ENCODE measurements at regions of chr4 and their contacts with region 1.

Region 1: DNA sequence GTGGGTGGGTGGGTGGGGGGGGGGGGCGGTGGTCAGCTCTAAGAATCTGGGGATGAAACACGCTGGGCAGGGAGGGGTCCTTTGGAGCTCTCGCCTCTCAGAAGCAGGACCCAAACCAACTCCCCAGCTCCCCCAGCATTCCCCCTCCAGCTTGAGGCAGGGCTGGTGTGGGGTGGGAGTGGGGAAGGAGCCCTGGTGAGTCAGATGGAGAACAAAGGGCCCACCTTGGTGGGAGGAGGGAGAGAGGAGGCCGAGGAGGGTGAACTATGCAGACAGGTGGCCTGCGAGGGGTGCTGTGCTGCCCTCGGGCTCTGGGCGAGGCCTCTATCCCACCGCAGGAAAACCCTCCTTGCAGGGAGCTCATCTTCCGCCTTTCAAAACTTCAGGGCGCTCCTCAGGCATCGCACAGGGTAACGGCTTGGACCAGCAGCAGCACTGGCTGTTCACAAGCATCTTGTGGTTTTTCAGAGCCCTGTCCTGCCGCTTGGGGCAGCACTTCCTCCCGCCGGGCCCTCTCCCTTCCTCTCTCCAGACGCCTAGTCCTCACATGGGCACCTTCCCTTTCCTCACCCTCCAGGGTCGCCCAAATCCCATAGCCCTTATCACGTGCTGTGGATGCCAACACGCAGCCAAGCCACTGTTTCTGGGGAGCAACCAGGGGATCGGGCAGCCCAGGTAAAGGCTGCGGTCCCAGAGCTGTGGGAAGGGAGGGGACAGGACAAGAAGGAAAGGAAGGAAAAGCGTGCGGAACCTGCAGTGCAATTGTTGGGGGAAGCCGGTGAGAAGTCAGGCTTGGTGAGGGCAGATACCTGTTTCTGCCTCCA is 34.0 kb upstream of the GRPEL1 start:
- DNase-seq: peak; percentile 68
- ATAC-seq: peak; percentile 61
- H3K4me3 Mint-ChIP-seq: peak overlapping the region; percentile 79
- H3K27ac Mint-ChIP-seq: no peak overlapping the region
- H3K4me1 Mint-ChIP-seq: peaks cover 18% of the 10 kb centered on the region
- H3K27me3 Mint-ChIP-seq: peaks cover 12% of the 10 kb centered on the region

Region 2: DNA sequence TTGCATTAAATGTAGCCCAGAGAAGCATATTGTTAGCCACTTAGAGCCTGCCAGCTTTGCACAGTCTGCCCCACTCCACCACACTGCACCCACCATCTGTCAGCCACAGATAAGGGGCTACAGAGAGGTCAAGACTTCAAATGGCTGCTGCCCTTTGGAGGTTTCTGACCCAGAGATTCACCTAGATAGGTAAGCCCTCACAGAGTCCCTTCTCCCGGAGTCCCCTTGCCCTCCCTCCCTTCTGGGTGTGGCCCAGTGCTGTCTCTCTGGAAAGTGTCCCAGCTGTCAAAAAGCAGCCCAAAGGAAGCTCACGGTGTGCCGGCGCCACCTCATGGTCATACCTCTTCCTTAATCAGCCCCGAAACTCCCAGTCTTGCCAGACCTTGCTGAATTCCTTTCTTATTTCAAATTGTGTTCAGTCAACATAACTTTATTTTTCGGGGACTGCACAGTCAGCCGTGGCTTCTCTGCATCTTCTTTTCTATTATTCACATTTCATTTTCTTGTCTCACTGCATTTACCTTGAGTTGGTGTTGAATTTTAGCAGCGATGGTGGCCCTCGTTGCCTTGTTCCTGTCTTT is 19.9 kb before region 1 on chr4:
- CTCF ChIA-PET with region 1: interaction called, 15 read pairs
- POLR2A ChIA-PET with region 1: no interaction called
- DNase-seq: peak; percentile 56
- ATAC-seq: peak; percentile 65
- H3K4me3 Mint-ChIP-seq: no peak overlapping the region
- H3K27ac Mint-ChIP-seq: no peak overlapping the region
- H3K4me1 Mint-ChIP-seq: peaks cover 2% of the 10 kb centered on the region
- H3K27me3 Mint-ChIP-seq: peaks cover 40% of the 10 kb centered on the region

Region 3: DNA sequence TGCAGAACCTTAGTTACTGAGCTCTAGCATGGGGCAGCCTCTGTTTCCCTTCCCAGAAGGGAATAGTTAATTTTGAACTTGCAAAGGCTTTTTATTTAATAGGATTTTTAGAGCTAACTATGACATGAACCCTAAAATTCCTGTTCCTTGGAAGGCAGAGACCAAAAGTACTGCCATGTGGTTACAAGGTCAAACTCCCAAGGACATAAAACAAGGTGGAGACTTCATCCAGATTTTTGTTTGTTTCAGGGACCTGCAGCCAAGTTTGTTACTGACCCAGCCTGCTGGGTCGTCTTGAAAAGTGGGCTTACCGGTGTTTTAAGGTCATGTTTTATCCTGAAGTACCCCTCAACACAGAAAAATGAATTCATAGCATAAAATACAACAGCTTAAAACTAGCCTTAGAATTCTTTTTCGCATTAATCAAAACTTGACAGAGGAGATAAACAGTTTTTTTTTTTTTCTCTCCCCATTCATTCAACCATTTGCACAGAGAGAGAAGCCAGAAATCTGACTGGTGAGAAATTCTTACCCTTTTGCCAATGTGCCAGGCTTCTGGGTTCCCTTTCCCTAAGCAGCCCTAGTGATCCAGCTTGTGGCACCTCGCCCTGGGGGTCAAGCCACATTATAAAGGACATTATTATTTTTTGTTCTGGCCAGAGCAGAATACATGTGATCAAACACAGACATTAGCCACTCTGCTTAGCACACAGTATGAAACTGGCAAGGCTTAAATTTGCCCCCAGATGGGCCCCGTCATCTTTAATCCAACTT is 12.5 kb before region 1 on chr4:
- CTCF ChIA-PET with region 1: interaction called, 18 read pairs
- POLR2A ChIA-PET with region 1: no interaction called
- DNase-seq: no peak
- ATAC-seq: no peak
- H3K4me3 Mint-ChIP-seq: no peak overlapping the region
- H3K27ac Mint-ChIP-seq: no peak overlapping the region
- H3K4me1 Mint-ChIP-seq: peaks cover under 1% of the 10 kb centered on the region
- H3K27me3 Mint-ChIP-seq: peaks cover 18% of the 10 kb centered on the region

Region 4: GRCh38 chr4:7658321-7659204 is 556.7 kb after region 1 on chr4:
- CTCF ChIA-PET with region 1: no interaction called
- POLR2A ChIA-PET with region 1: no interaction called
- DNase-seq: no peak
- ATAC-seq: no peak
- H3K4me3 Mint-ChIP-seq: no peak overlapping the region
- H3K27ac Mint-ChIP-seq: no peak overlapping the region
- H3K4me1 Mint-ChIP-seq: peaks cover 9% of the 10 kb centered on the region
- H3K27me3 Mint-ChIP-seq: peaks cover 5% of the 10 kb centered on the region

Measured in activated CD8-positive, alpha-beta T cell treated with anti-CD3 and anti-CD28 coated beads, Interleukin-2, amount 10 ng/mL, durations not matched to agents 7 days and 5 days (primary cell).